Thyroid gland (tissue), 4 donors: ENCODE measurements at regions of chr2 and their contacts with region 1.

Region 1: DNA sequence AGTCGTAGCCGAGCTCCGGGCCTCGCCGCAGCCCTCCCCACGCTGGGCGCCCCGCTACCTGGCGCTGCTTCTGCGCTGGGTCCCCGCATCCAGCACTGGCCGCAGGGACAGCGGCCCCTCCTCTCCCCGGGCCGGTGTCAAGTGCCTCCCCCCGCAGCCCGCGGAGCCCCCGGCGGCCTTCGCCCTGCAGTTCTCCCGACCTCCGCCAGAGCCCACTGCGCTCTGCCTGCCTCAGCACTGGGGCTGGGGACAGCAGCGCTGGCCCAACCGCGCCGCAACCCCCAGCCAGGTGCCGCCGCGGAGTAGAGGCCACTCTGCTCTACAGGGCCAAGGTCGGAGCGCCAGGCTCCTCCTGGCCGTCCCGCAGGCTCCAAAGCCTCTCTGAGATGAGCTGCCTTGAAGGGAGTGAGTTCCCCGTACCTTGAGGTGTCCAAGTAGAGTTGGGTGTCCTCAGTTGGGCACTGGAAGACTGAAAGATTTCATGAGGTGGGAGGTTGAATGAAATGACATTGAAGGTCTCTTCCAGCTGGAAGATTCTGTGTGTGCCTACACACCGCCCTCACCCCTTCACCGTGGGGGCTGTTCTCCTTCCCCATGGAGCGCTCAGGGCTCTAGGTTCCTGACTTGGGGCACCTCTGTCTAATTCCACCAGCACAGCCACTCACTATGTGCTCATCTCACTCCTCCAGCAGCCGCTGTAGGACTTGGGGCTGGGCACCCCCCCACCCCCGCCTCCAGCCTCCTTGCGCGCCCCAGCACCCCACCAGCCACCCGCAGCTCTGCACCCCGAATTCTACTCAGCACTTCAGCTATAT is 854 bp upstream of the DNMT3A start:
- DNase-seq: peak; percentile 84 to 86
- H3K4me3 ChIP-seq: peak overlapping the region in 2 of 3 donors; percentile 38 to 49
- H3K27ac ChIP-seq: peak overlapping the region in 2 of 3 donors; percentile 46 to 77
- H3K4me1 ChIP-seq: peaks cover 7 to 20% of the 10 kb centered on the region in 2 donors
- H3K27me3 ChIP-seq: no peaks in the 10 kb centered on the region
- CTCF ChIP-seq: peak; percentile 91 to 99 (median 99)
- POLR2A ChIP-seq: peak in 1 of 2 donors; percentile 20

Region 2: DNA sequence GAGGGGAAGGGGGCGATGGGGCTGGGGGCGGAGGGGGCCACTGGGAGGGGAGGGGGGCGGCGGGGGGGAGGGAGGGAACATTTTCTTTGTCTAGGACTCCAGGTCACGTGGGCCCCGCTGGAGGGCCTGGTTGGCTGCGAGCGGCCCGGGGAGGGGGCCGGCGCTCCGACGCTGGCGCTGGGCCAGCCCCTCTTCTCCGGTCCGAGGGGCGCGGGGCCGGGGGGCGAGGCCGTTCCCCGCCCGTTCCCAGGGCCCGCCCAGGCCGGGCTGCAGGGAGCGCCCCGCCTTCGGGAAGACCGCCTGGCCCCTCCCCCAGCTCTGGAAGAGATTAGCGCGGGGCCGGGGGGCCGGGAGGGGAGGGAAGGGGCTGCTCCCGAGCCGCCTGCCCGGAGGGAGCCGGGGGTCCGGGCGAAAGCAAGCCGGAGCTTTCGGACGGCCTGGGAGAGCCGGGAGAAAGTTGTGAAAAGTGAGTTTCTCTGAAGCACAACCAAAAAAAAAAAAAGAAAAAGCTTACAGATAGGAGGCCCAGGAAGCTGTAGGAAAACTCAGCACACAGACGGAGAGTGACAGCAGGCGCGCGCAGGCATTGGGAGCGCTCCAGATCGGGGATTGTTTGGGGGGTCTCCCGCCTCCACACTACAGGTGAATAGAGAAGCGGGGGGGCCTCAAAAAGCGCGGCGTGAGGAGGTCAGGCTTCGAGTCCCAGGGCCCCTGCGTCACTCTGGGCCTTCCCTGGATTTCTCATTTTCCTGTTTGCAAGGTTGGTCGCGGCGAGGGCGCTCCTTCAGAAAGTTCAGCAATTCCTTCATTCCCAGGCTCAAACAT is 90.1 kb before region 1 on chr2:
- intact Hi-C with region 1: loop called (anchors 5 kb)
- DNase-seq: peak; percentile 69 to 80
- H3K4me3 ChIP-seq: peak overlapping the region in 2 of 3 donors; percentile 51 to 66
- H3K27ac ChIP-seq: peak overlapping the region; percentile 86 to 91 (median 89)
- H3K4me1 ChIP-seq: peaks cover 12 to 25% of the 10 kb centered on the region in 2 donors
- H3K27me3 ChIP-seq: no peaks in the 10 kb centered on the region
- CTCF ChIP-seq: peak in 1 of 6 experiments; percentile 9
- POLR2A ChIP-seq: no peak

Region 3: DNA sequence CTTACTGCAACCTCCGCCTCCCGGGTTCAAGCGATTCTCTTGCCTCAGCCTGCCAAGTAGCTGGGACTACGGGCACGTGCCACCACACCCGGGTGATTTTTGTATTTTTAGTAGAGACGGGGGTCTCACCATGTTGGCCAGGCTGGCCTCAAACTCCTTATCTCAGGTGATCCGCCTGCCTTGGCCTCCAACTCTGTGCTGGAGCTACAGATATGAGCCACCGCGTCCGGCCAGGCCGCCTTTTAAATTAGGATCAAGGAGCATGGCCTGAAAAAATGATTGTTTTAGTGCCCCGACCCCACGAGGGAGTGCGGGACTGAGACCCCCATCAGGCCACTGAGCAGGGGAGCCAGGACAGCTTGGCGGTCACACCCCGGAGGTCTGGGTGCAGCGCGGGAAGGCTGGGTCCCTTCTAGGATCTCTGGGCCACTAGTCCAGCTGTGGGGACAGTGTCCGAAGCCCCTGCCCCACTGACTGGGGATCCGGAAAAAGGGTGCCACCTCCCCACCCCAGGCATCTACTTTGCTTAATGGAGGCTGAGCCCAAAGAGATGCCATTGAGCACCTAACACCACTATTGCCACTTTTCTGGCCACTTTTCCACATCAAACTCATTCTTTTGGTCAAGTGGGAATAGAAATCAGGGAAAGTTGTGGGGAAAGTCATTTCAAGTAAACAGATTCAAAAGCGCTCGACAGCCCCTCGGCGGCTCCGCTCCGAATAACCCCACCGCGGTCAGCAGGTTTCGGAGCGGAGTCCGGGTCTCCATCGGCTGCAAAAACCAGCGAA is 18.9 kb after region 1 on chr2:
- intact Hi-C with region 1: loop called (anchors 2 kb)
- DNase-seq: no peak
- H3K4me3 ChIP-seq: peak overlapping the region in 1 of 3 donors; percentile 14
- H3K27ac ChIP-seq: no peak overlapping the region
- H3K4me1 ChIP-seq: peaks cover 0 to 6% of the 10 kb centered on the region in 2 donors
- H3K27me3 ChIP-seq: no peaks in the 10 kb centered on the region
- CTCF ChIP-seq: no peak
- POLR2A ChIP-seq: no peak

Region 4: GRCh38 chr2:25521665-25522387 is 179.2 kb after region 1 on chr2:
- intact Hi-C with region 1: loop called (anchors 10 kb)
- DNase-seq: no peak
- H3K4me3 ChIP-seq: no peak overlapping the region
- H3K27ac ChIP-seq: no peak overlapping the region
- H3K4me1 ChIP-seq: peaks cover 7 to 8% of the 10 kb centered on the region in 2 donors
- H3K27me3 ChIP-seq: no peaks in the 10 kb centered on the region
- CTCF ChIP-seq: peak; percentile 65 to 95 (median 86)
- POLR2A ChIP-seq: no peak